ENCODE measurements at regions of chr14 and their contacts with region 1.

Region 1: GRCh38 chr14:60184146-60184904 is 19.1 kb upstream of the DHRS7 start:
- DNase-seq: no peak
- ATAC-seq: peak; percentile 76
- H3K4me3 ChIP-seq: peak overlapping the region; percentile 43; the same call in 1 of the 2 replicates
- H3K27ac ChIP-seq: peak overlapping the region; percentile 72
- H3K4me1 ChIP-seq: peaks cover 11% of the 10 kb centered on the region
- H3K27me3 ChIP-seq: no peaks in the 10 kb centered on the region
- CTCF ChIP-seq: peak; percentile 45 to 78 (median 61)
- EP300 ChIP-seq: no peak
- POLR2A ChIP-seq: no peak
- RAD21 ChIP-seq: peak; percentile 95

Region 2: GRCh38 chr14:59377991-59378601 is 806.2 kb before region 1 on chr14:
- CTCF ChIA-PET with region 1: no interaction called
- POLR2A ChIA-PET with region 1: no interaction called
- RAD21 ChIA-PET with region 1: no interaction called
- SMC1A ChIA-PET with region 1: no interaction called
- in situ Hi-C with region 1: no loop called
- intact Hi-C with region 1: no loop called
- DNase-seq: no peak
- ATAC-seq: no peak
- H3K4me3 ChIP-seq: no peak overlapping the region
- H3K27ac ChIP-seq: no peak overlapping the region
- H3K4me1 ChIP-seq: no peaks in the 10 kb centered on the region
- H3K27me3 ChIP-seq: no peaks in the 10 kb centered on the region
- CTCF ChIP-seq: no peak
- EP300 ChIP-seq: no peak
- POLR2A ChIP-seq: no peak
- RAD21 ChIP-seq: no peak

Region 3: DNA sequence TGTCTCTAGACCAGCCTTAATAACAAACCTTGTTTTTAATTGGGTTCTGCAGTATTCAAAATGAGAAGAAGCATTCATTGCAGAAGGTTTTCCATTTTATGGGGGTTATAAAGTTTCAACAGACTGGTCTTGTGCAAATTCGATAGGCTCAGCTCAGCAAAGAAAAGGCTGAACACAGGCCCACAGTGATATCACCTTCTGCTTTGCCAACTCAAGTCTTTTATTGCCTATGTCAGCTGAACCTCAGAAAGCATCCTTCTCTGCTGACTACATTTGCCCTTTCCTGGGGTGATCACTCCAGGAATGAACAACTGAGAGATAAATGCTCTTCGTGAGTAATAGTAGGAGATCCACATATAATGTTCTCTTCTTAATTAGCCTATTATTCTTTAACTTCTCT is 473.2 kb before region 1 on chr14:
- CTCF ChIA-PET with region 1: no interaction called
- POLR2A ChIA-PET with region 1: no interaction called
- RAD21 ChIA-PET with region 1: no interaction called
- SMC1A ChIA-PET with region 1: no interaction called
- in situ Hi-C with region 1: no loop called
- intact Hi-C with region 1: loop called (anchors 5 kb)
- DNase-seq: no peak
- ATAC-seq: no peak
- H3K4me3 ChIP-seq: no peak overlapping the region
- H3K27ac ChIP-seq: no peak overlapping the region
- H3K4me1 ChIP-seq: no peaks in the 10 kb centered on the region
- H3K27me3 ChIP-seq: no peaks in the 10 kb centered on the region
- CTCF ChIP-seq: no peak
- EP300 ChIP-seq: no peak
- POLR2A ChIP-seq: no peak
- RAD21 ChIP-seq: no peak

Region 4: GRCh38 chr14:59771577-59771976 is 412.7 kb before region 1 on chr14:
- CTCF ChIA-PET with region 1: no interaction called
- POLR2A ChIA-PET with region 1: no interaction called
- RAD21 ChIA-PET with region 1: no interaction called
- SMC1A ChIA-PET with region 1: no interaction called
- in situ Hi-C with region 1: no loop called
- intact Hi-C with region 1: no loop called
- DNase-seq: no peak
- ATAC-seq: no peak
- H3K4me3 ChIP-seq: no peak overlapping the region
- H3K27ac ChIP-seq: no peak overlapping the region
- H3K4me1 ChIP-seq: no peaks in the 10 kb centered on the region
- H3K27me3 ChIP-seq: no peaks in the 10 kb centered on the region; a peak in 1 of 4 replicates
- CTCF ChIP-seq: no peak
- EP300 ChIP-seq: no peak
- POLR2A ChIP-seq: no peak
- RAD21 ChIP-seq: no peak

Region 5: DNA sequence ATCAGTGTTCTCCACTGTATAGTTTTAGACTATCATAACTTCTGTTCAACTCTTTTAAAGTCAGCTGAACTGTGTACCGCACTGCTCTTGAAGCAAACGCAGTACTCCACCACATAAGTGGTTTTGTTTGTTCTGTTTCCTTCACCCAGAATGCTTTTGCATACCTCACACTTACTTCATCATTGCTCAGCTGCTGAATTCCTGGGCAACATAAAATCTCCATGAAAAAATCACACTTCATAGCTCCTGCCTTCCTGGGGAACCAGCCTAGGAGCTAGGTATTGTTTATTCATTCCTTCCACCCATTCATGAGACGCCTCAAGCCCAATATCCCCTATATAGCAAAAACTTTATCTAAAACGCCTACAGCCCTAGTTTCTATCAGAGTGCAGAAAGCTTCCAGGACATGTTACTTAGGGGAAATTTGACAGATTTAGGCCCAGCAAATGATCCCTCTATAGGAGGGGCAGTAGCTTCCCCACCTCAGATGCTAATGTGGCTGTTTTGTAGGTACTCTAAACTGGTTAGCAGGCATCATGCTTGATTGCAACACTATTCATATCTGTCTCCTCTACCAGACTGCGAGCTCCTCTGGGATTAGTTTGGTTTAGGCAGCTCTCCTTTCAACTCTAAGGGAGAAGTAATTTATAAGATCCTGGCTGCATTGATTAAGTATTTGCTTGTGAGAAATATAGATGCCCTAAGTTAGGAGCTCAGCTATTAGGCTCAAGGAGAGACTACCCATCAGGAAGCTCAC is 219.9 kb before region 1 on chr14:
- CTCF ChIA-PET with region 1: interaction called, 155 read pairs
- POLR2A ChIA-PET with region 1: interaction called, 4 read pairs
- RAD21 ChIA-PET with region 1: interaction called, 110 read pairs
- SMC1A ChIA-PET with region 1: interaction called, 158 read pairs
- in situ Hi-C with region 1: loop called (anchors 5 kb)
- intact Hi-C with region 1: loop called (anchors 1 kb)
- DNase-seq: no peak
- ATAC-seq: peak; percentile 42
- H3K4me3 ChIP-seq: 0 out of 2 replicates have a peak overlapping the region, but pooled peaks have one; percentile 6
- H3K27ac ChIP-seq: peak overlapping the region; percentile 47
- H3K4me1 ChIP-seq: peaks cover 6% of the 10 kb centered on the region; the same call in 1 of the 2 replicates
- H3K27me3 ChIP-seq: no peaks in the 10 kb centered on the region
- CTCF ChIP-seq: no peak
- EP300 ChIP-seq: no peak
- POLR2A ChIP-seq: no peak
- RAD21 ChIP-seq: no peak

Region 6: GRCh38 chr14:60091550-60092530 is 92.5 kb before region 1 on chr14 and contains the start of gene PCNX4:
- CTCF ChIA-PET with region 1: interaction called, 11 read pairs
- POLR2A ChIA-PET with region 1: interaction called, 3 read pairs
- RAD21 ChIA-PET with region 1: interaction called, 19 read pairs
- SMC1A ChIA-PET with region 1: interaction called, 9 read pairs
- in situ Hi-C with region 1: no loop called
- intact Hi-C with region 1: loop called (anchors 2 kb)
- DNase-seq: peak; percentile 96
- ATAC-seq: peak; percentile 89
- H3K4me3 ChIP-seq: peak within 1 kb of the TSS; percentile 74
- H3K27ac ChIP-seq: peak within 1 kb of the TSS; percentile 95
- H3K4me1 ChIP-seq: peaks cover 11% of the 10 kb centered on the region
- H3K27me3 ChIP-seq: no peaks in the 10 kb centered on the region
- CTCF ChIP-seq: 0 out of 6 replicates have a peak, but pooled peaks of 1 of the 3 experiments have one; percentile 2
- EP300 ChIP-seq: peak; percentile 39 to 50; a peak in 3 of 4 replicates
- POLR2A ChIP-seq: peak; percentile 97
- RAD21 ChIP-seq: no peak
- polyA plus RNA-seq, gene PCNX4: 13.8 to 15.7 TPM

Region 7: GRCh38 chr14:60195179-60195810 is 11.0 kb after region 1 on chr14:
- CTCF ChIA-PET with region 1: interaction called, 61 read pairs
- POLR2A ChIA-PET with region 1: no interaction called
- RAD21 ChIA-PET with region 1: interaction called, 22 read pairs
- SMC1A ChIA-PET with region 1: interaction called, 60 read pairs
- in situ Hi-C with region 1: no loop called
- intact Hi-C with region 1: no loop called
- DNase-seq: no peak
- ATAC-seq: peak; percentile 88
- H3K4me3 ChIP-seq: no peak overlapping the region
- H3K27ac ChIP-seq: no peak overlapping the region
- H3K4me1 ChIP-seq: peaks cover 10% of the 10 kb centered on the region
- H3K27me3 ChIP-seq: no peaks in the 10 kb centered on the region
- CTCF ChIP-seq: peak; percentile 50 to 70 (median 59); a peak in 5 of 6 replicates
- EP300 ChIP-seq: no peak
- POLR2A ChIP-seq: no peak
- RAD21 ChIP-seq: peak; percentile 91

Region 8: GRCh38 chr14:60331201-60332045 is 147.1 kb after region 1 on chr14:
- CTCF ChIA-PET with region 1: interaction called, 231 read pairs
- POLR2A ChIA-PET with region 1: interaction called, 4 read pairs
- RAD21 ChIA-PET with region 1: interaction called, 30 read pairs
- SMC1A ChIA-PET with region 1: interaction called, 151 read pairs
- in situ Hi-C with region 1: loop called (anchors 5 kb)
- intact Hi-C with region 1: loop called (anchors 5 kb)
- DNase-seq: peak; percentile 52
- ATAC-seq: peak; percentile 80
- H3K4me3 ChIP-seq: peak overlapping the region; percentile 69
- H3K27ac ChIP-seq: peak overlapping the region; percentile 84
- H3K4me1 ChIP-seq: peaks cover 11% of the 10 kb centered on the region
- H3K27me3 ChIP-seq: no peaks in the 10 kb centered on the region
- CTCF ChIP-seq: peak; percentile 71 to 91 (median 84)
- EP300 ChIP-seq: no peak
- POLR2A ChIP-seq: peak; percentile 65
- RAD21 ChIP-seq: peak; percentile 68

Region 9: GRCh38 chr14:60514741-60515491 is 330.6 kb after region 1 on chr14:
- CTCF ChIA-PET with region 1: no interaction called
- POLR2A ChIA-PET with region 1: no interaction called
- RAD21 ChIA-PET with region 1: no interaction called
- SMC1A ChIA-PET with region 1: no interaction called
- in situ Hi-C with region 1: no loop called
- intact Hi-C with region 1: no loop called
- DNase-seq: no peak
- ATAC-seq: no peak
- H3K4me3 ChIP-seq: peak overlapping the region; percentile 41; the same call in 1 of the 2 replicates
- H3K27ac ChIP-seq: no peak overlapping the region
- H3K4me1 ChIP-seq: no peaks in the 10 kb centered on the region
- H3K27me3 ChIP-seq: peaks cover 9 to 14% of the 10 kb centered on the region in 2 experiments
- CTCF ChIP-seq: 0 out of 6 replicates have a peak, but pooled peaks of 1 of the 3 experiments have one; percentile 24
- EP300 ChIP-seq: no peak
- POLR2A ChIP-seq: no peak
- RAD21 ChIP-seq: no peak

Measured in GM12878 (cell line).